ENCODE measurements at regions of chr21 and their contacts with region 1.

Region 1: GRCh38 chr21:40618191-40618973 is 228.6 kb downstream of the DSCAM start:
- DNase-seq: no peak

Region 2: DNA sequence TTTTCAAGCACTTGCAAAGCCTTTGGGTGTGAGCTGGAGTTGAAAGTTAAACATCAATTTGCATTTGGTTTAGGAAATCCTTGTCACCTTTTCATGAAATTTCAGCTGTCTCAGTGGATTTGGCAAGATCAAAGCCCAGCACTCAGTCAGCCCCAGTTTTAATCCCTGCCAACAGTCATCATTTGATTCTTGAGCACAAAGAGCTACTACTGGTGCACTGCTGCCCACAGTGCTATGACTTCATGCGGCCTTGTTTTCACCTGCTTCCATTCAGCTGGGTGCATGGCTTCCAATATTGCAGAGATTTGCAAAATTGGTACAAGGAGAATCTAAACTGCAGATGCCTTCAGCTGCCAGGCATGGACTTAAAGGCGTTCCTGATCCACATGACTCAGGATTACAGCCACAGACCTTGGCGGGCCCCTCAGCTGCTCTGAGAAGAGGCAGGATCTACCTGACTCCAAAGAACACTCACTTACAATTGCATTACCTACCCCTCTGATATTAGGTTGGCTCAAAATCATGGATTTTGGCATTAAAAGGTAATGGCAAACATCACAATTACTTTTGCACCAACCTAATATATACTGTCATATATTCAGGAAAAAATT is 30.5 kb before region 1 on chr21:
- intact Hi-C with region 1: loop called (anchors 2 kb)
- DNase-seq: peak in 2 of 42 donors; percentile 13 to 41

Region 3: DNA sequence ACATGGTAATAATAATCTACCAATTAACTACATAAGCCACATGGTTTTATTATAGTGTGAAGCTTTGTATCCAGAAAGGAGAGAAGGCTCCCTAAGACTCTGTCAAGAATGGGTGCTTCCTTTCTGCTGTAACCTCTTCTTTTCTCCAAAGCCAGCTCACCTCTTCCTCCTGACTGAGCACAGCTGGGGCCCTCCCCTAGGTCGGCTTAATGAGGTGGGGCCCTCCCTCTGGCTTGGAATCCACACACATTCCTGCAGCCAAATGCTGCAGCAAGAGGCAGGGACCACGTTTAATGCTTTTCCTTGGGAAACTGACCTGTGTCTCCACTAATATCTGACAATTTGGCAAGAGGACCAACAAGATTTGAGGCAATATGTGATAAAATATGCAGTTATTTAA is 133.7 kb after region 1 on chr21:
- intact Hi-C with region 1: no loop called
- DNase-seq: no peak